AG04449 (cell line): ENCODE measurements at regions of chr15 and their contacts with region 1.

Region 1: DNA sequence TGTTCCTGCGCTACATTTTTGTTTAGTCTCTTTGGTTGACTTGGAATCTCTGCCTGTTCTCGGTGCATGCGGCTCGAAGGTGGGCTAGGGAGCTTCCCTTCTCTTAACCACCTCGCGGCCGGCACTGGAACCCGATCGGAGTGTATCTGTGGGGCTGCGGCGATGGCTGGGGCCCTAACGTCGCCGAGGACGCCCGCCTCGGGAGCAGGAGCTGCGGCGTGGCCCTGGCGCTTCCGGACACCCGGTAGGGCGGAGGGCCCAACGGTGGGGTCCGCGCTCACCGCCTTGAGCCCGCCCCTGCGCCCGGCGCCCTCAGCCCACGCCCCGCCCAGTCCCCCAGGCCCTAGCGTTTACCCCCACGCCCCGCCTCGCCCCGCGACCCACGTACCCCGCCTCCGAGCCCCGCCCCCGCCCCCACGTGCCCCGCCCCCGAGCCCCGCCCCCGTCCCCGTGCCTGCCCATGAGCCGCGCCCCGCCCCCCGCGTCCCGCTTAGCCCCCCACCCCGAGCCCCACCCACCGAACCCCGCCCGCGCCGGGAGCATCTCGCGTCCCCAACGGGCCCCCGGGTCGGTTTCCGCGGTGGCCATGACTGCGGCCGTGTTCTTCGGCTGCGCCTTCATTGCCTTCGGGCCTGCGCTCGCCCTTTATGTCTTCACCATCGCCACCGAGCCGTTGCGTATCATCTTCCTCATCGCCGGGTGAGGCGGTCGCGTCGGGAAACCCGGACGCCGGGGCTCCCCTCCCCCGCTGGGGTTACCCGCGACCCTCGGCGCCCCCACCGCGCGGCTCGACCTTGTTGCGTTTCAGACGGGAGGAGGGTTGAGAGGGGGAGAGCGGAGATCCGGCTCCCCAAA is at the start of gene APH1B:
- DNase-seq: no peak
- H3K4me3 ChIP-seq: peak within 1 kb of the TSS; percentile 74
- CTCF ChIP-seq: peak; percentile 11

Region 2: GRCh38 chr15:63288778-63289378 is 11.6 kb after region 1 on chr15:
- CTCF ChIA-PET with region 1: interaction called, 50 read pairs
- POLR2A ChIA-PET with region 1: no interaction called
- DNase-seq: no peak
- H3K4me3 ChIP-seq: no peak overlapping the region
- CTCF ChIP-seq: peak; percentile 39